GM12878 (cell line): ENCODE measurements at regions of chr3 and their contacts with region 1.

Region 1: DNA sequence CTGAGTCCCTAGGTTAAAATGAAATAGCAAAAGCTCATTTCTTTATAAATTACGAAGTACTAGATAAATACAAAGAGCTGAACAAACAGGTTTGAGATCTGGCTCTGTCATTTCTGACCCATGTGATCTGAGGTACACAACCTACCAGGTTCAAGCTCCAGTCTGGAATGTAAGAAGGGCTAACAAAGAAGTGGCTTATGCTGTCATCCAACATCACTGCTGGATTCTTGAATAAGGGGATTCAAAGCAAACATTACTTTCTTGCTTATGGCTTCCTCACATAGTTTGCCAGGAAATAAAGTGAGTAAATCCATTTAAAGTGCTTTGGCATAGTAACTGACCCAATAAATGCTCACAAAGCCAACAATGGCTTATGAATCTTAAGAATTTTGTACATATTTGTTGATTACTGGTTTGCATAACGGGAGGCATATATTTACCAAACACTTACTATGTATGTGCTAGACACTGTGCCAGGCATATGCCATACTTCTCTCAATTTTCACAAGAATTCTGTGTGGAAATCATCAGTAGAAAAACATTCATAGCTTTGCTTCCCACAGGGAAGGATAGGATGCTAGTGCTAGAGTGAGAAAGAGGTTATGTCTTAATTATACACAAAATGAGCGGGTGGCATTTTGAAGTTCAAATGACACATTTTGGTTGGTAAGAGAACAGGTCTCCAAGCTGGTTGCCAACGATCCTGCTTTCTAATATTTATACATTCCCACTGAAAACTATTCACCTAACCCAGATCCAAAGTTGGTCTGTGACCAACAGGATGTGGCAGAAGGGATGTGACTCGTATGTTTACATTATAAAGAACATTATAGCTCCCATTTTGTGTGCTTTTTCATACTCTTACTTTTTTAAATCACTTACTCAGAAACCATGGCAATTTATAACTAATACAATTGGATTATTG is 38.7 kb upstream of the CSPG5 start:
- DNase-seq: no peak
- ATAC-seq: no peak
- H3K4me3 ChIP-seq: no peak overlapping the region
- H3K27ac ChIP-seq: no peak overlapping the region
- H3K4me1 ChIP-seq: no peaks in the 10 kb centered on the region
- H3K27me3 ChIP-seq: no peaks in the 10 kb centered on the region
- CTCF ChIP-seq: no peak
- EP300 ChIP-seq: no peak
- POLR2A ChIP-seq: no peak
- RAD21 ChIP-seq: no peak

Region 2: DNA sequence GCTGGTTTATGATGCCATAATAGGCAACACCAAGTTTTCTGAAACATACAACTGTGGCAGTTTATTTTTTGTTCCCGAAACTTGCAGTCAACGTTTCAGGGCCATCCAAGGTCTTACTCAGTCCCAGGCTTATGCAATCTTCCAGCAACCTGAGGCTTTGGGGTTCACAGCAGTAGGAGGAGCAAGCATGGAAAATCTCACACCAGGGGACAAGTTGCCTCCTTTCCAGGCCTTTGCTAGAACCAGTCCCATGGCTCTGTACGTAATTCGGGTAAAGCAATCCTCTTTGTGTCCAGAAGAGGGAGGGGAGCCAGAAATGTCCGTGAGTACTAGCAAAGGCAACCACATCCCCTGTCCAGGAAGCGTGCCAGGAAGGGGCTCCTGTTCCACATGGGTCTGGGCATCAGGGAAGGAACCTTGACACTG is 1009.7 kb before region 1 on chr3:
- CTCF ChIA-PET with region 1: no interaction called
- POLR2A ChIA-PET with region 1: no interaction called
- RAD21 ChIA-PET with region 1: no interaction called
- SMC1A ChIA-PET with region 1: no interaction called
- in situ Hi-C with region 1: no loop called
- intact Hi-C with region 1: no loop called
- DNase-seq: no peak
- ATAC-seq: no peak
- H3K4me3 ChIP-seq: no peak overlapping the region
- H3K27ac ChIP-seq: no peak overlapping the region
- H3K4me1 ChIP-seq: no peaks in the 10 kb centered on the region
- H3K27me3 ChIP-seq: peaks cover 2% of the 10 kb centered on the region in 2 experiments; a peak in 2 of 4 replicates
- CTCF ChIP-seq: no peak
- EP300 ChIP-seq: no peak
- POLR2A ChIP-seq: no peak
- RAD21 ChIP-seq: no peak

Region 3: GRCh38 chr3:47628426-47628825 is 11.1 kb after region 1 on chr3:
- CTCF ChIA-PET with region 1: interaction called, 6 read pairs
- POLR2A ChIA-PET with region 1: interaction called, 12 read pairs
- RAD21 ChIA-PET with region 1: interaction called, 4 read pairs
- SMC1A ChIA-PET with region 1: interaction called, 5 read pairs
- in situ Hi-C with region 1: no loop called
- intact Hi-C with region 1: no loop called
- DNase-seq: no peak
- ATAC-seq: no peak
- H3K4me3 ChIP-seq: no peak overlapping the region
- H3K27ac ChIP-seq: no peak overlapping the region
- H3K4me1 ChIP-seq: no peaks in the 10 kb centered on the region
- H3K27me3 ChIP-seq: no peaks in the 10 kb centered on the region
- CTCF ChIP-seq: no peak
- EP300 ChIP-seq: no peak
- POLR2A ChIP-seq: no peak
- RAD21 ChIP-seq: no peak